Panc1 (cell line): ENCODE measurements at regions of chr9 and their contacts with region 1.

Region 1: DNA sequence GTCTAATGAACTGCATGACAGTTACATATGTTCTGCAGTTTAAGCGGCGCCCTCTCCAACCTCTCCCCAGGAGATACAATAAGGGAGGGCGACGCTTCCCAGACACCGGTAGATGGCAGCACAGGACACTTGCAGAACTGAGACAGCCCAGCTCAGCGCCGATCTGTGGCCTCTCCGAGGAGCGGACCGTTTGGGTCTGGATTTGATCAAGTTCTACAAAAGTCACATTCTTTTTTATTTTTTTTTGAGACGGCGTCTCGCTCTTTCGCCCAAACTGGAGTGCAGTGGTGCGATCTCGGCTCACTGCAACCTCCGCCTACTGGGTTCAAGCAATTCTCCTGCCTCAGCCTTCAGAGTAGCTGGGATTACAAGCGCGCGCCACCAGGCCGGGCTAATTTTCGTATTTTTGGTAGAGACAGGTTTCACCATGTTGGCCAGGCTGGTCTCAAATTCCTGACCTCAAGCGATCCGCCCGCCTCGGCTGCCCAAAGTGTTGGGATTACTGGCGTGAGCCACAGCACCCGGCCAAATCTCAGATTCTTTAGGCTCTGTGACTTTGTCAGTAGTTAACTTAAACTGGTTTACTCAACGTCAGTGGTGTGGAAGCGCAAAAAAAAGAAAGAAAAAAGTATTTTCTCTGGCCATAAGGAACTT is 1.4 kb upstream of the ATOSB start:
- DNase-seq: peak; percentile 82
- ATAC-seq: peak; percentile 83
- H3K4me3 ChIP-seq: peak overlapping the region; percentile 70 to 97
- H3K27ac ChIP-seq: peak overlapping the region; percentile 52
- H3K4me1 ChIP-seq: peaks cover 21% of the 10 kb centered on the region
- H3K27me3 ChIP-seq: no peaks in the 10 kb centered on the region
- CTCF ChIP-seq: no peak

Region 2: DNA sequence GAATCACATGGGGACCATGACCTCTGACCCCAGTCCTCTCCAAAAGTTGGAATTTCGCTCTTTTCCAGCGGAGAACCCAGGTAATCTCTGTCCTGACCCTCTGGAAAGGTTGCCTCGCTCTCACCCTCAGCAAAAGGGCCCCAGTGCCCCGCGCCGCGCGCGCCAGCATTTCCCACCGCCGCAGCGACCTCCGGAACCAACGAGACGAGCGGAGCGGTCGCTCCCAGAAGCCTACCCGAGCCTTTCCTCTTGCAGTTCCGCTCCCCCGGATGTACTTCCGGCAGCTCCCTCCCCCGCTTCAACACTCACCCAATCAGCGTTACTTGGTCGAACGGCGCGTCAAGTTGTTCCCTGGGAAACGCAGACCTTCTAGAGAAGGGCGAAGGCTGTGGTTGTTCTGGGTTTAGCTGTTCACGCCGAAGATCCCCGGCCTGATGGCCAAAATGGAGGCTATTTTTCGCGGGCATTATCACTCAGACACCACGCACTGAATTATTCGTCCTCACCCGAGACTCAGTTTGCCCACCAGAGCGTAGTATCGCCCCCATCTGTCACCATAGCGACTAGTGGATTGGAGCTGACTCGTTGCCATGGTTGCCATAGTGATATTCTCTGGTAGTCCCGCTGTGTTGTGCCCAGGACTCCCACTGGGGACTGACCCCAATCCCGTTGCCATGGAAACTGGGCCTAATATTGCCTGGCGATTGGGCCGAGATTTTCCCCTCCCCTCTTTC is 13.9 kb before region 1 on chr9 and contains the start of gene STOML2:
- CTCF ChIA-PET with region 1: interaction called, 4 read pairs
- POLR2A ChIA-PET with region 1: interaction called, 12 read pairs
- in situ Hi-C with region 1: no loop called
- intact Hi-C with region 1: no loop called
- DNase-seq: peak; percentile 78
- ATAC-seq: peak; percentile 98
- H3K4me3 ChIP-seq: peak within 1 kb of the TSS; percentile 80 to 97
- H3K27ac ChIP-seq: peak within 1 kb of the TSS; percentile 96
- H3K4me1 ChIP-seq: peaks cover 18% of the 10 kb centered on the region
- H3K27me3 ChIP-seq: no peaks in the 10 kb centered on the region
- CTCF ChIP-seq: no peak
- total RNA-seq, gene STOML2: 264 TPM

Region 3: GRCh38 chr9:35229066-35229778 is 112.2 kb after region 1 on chr9:
- CTCF ChIA-PET with region 1: no interaction called
- POLR2A ChIA-PET with region 1: no interaction called
- in situ Hi-C with region 1: no loop called
- intact Hi-C with region 1: no loop called
- DNase-seq: no peak
- ATAC-seq: no peak
- H3K4me3 ChIP-seq: no peak overlapping the region
- H3K27ac ChIP-seq: no peak overlapping the region
- H3K4me1 ChIP-seq: no peaks in the 10 kb centered on the region
- H3K27me3 ChIP-seq: no peaks in the 10 kb centered on the region
- CTCF ChIP-seq: no peak

Region 4: GRCh38 chr9:35258676-35259474 is 141.8 kb after region 1 on chr9:
- CTCF ChIA-PET with region 1: interaction called, 12 read pairs
- POLR2A ChIA-PET with region 1: no interaction called
- in situ Hi-C with region 1: no loop called
- intact Hi-C with region 1: loop called (anchors 1 kb)
- DNase-seq: peak; percentile 43
- ATAC-seq: peak; percentile 95
- H3K4me3 ChIP-seq: no peak overlapping the region
- H3K27ac ChIP-seq: no peak overlapping the region
- H3K4me1 ChIP-seq: no peaks in the 10 kb centered on the region
- H3K27me3 ChIP-seq: no peaks in the 10 kb centered on the region
- CTCF ChIP-seq: peak; percentile 92

Region 5: DNA sequence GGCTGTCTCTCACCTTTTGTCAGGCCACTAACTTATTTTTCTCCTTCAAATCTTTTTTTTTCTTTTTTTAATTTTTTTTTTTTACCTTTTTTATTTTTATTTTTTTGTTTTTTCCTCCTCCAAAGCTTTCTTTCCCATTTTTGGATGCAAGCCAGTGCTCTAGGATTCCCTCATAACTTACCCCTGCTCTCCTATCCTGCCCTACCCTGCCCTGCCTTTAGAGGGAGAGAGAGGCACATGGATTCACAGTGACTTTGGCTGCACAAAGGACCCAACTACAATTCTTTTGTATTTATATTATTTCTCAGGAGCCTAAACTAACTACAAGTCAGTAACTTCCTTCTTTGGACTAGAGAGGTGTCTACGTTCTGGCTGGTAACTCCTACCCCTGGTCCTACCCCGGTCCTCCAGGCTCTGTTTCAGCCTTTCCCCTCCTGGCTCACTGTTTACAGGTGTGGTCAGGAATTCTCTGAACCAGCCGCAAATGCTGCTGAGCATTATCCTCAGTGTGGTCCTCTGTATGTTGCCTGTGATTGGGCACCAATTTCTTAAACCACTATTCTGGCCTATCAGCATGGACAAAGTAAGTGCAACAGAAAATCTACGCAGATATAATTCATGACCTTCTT is 364.4 kb after region 1 on chr9:
- CTCF ChIA-PET with region 1: interaction called, 4 read pairs
- POLR2A ChIA-PET with region 1: interaction called, 5 read pairs
- in situ Hi-C with region 1: no loop called
- intact Hi-C with region 1: loop called (anchors 1 kb)
- DNase-seq: peak; percentile 43
- ATAC-seq: peak; percentile 83
- H3K4me3 ChIP-seq: no peak overlapping the region
- H3K27ac ChIP-seq: peak overlapping the region; percentile 74
- H3K4me1 ChIP-seq: peaks cover 8% of the 10 kb centered on the region
- H3K27me3 ChIP-seq: no peaks in the 10 kb centered on the region
- CTCF ChIP-seq: peak; percentile 94